Activated naive CD4-positive, alpha-beta T cell treated with anti-CD3 and anti-CD28 coated beads for 36 hours (primary cell): ENCODE measurements at regions of chr6 and their contacts with region 1.

Region 1: GRCh38 chr6:25250878-25251277 is 28.3 kb upstream of the CARMIL1 start:
- DNase-seq: peak; percentile 76
- H3K4me3 Mint-ChIP-seq: no peak overlapping the region
- H3K27ac Mint-ChIP-seq: peak overlapping the region; percentile 62
- H3K4me1 Mint-ChIP-seq: peaks cover 12% of the 10 kb centered on the region
- H3K27me3 Mint-ChIP-seq: no peaks in the 10 kb centered on the region

Region 2: GRCh38 chr6:25237579-25237978 is 13.3 kb before region 1 on chr6:
- CTCF ChIA-PET with region 1: interaction called, 4 read pairs
- intact Hi-C with region 1: loop called (anchors 1 kb)
- DNase-seq: no peak
- H3K4me3 Mint-ChIP-seq: no peak overlapping the region
- H3K27ac Mint-ChIP-seq: no peak overlapping the region
- H3K4me1 Mint-ChIP-seq: peaks cover 8% of the 10 kb centered on the region
- H3K27me3 Mint-ChIP-seq: no peaks in the 10 kb centered on the region